ENCODE measurements at regions of chr5 and their contacts with region 1.

Region 1: GRCh38 chr5:66144074-66144833 is at the start of gene SREK1:
- DNase-seq: peak; percentile 96
- H3K4me3 Mint-ChIP-seq: peak within 1 kb of the TSS; percentile 97
- H3K27ac Mint-ChIP-seq: peak within 1 kb of the TSS; percentile 99
- H3K4me1 Mint-ChIP-seq: peaks cover 34% of the 10 kb centered on the region
- H3K27me3 Mint-ChIP-seq: no peaks in the 10 kb centered on the region
- total RNA-seq, gene SREK1: 70.3 and 75.2 TPM in 2 replicates

Region 2: DNA sequence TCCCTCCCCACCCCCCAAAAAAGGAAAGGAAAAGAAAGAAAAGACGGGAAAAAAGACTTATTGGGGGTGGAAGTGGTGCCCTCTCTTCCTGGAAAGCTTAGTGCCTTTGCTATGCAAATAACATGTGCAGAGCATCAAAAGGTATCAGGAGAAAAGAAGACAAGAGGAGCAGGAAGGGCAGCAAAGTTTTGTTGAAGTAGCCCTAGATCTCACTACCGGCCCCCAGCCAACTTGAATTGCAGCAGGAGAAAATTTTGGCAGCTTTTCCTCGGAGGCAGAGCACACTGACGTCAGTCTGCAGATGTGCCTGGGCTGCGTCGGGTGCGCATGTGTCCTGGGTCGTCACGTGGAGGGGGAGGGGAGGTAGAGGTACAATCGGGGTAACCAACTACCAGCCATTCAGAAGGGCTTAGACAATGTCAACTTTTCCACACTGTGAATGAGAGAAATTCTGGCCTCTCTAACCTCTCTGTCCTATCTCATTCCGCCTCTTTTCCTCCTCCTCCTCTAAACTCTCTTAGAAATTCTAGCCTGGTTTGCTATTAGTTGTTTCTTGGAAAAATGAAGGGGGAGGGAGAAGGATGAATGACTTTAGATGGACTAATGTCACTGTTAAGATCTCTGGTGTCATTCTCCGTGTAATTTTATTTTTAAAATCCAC is 662.5 kb before region 1 on chr5 and contains the start of gene ADAMTS6:
- intact Hi-C with region 1: loop called (anchors 10 kb)
- DNase-seq: peak; percentile 91
- H3K4me3 Mint-ChIP-seq: no peak within 1 kb of the TSS
- H3K27ac Mint-ChIP-seq: peak within 1 kb of the TSS; percentile 85
- H3K4me1 Mint-ChIP-seq: peaks cover 18% of the 10 kb centered on the region
- H3K27me3 Mint-ChIP-seq: peaks cover 6% of the 10 kb centered on the region
- total RNA-seq, gene ADAMTS6: 0.73 and 0.89 TPM in 2 replicates

Region 3: GRCh38 chr5:65624571-65625555 is 519.4 kb before region 1 on chr5 and contains the starts of genes SHLD3 and TRAPPC13:
- intact Hi-C with region 1: loop called (anchors 1 kb)
- DNase-seq: peak; percentile 95
- H3K4me3 Mint-ChIP-seq: peak within 1 kb of the TSS; percentile 91
- H3K27ac Mint-ChIP-seq: peak within 1 kb of the TSS; percentile 99
- H3K4me1 Mint-ChIP-seq: peaks cover 28% of the 10 kb centered on the region
- H3K27me3 Mint-ChIP-seq: no peaks in the 10 kb centered on the region
- total RNA-seq, gene SHLD3: 4.7 and 5.1 TPM in 2 replicates
- total RNA-seq, gene TRAPPC13: 22.4 and 27.2 TPM in 2 replicates

Region 4: GRCh38 chr5:66002415-66002814 is 141.8 kb before region 1 on chr5:
- intact Hi-C with region 1: loop called (anchors 10 kb)
- DNase-seq: no peak
- H3K4me3 Mint-ChIP-seq: no peak overlapping the region
- H3K27ac Mint-ChIP-seq: no peak overlapping the region
- H3K4me1 Mint-ChIP-seq: peaks cover 14% of the 10 kb centered on the region
- H3K27me3 Mint-ChIP-seq: no peaks in the 10 kb centered on the region

Region 5: GRCh38 chr5:66129144-66129543 is 15.1 kb before region 1 on chr5:
- intact Hi-C with region 1: no loop called
- DNase-seq: peak; percentile 45
- H3K4me3 Mint-ChIP-seq: no peak overlapping the region
- H3K27ac Mint-ChIP-seq: no peak overlapping the region
- H3K4me1 Mint-ChIP-seq: no peaks in the 10 kb centered on the region
- H3K27me3 Mint-ChIP-seq: peaks cover 5% of the 10 kb centered on the region

Region 6: GRCh38 chr5:66171349-66172344 is 27.4 kb after region 1 on chr5:
- intact Hi-C with region 1: loop called (anchors 1 kb)
- DNase-seq: peak; percentile 84
- H3K4me3 Mint-ChIP-seq: no peak overlapping the region
- H3K27ac Mint-ChIP-seq: no peak overlapping the region
- H3K4me1 Mint-ChIP-seq: peaks cover 13% of the 10 kb centered on the region
- H3K27me3 Mint-ChIP-seq: no peaks in the 10 kb centered on the region

Region 7: DNA sequence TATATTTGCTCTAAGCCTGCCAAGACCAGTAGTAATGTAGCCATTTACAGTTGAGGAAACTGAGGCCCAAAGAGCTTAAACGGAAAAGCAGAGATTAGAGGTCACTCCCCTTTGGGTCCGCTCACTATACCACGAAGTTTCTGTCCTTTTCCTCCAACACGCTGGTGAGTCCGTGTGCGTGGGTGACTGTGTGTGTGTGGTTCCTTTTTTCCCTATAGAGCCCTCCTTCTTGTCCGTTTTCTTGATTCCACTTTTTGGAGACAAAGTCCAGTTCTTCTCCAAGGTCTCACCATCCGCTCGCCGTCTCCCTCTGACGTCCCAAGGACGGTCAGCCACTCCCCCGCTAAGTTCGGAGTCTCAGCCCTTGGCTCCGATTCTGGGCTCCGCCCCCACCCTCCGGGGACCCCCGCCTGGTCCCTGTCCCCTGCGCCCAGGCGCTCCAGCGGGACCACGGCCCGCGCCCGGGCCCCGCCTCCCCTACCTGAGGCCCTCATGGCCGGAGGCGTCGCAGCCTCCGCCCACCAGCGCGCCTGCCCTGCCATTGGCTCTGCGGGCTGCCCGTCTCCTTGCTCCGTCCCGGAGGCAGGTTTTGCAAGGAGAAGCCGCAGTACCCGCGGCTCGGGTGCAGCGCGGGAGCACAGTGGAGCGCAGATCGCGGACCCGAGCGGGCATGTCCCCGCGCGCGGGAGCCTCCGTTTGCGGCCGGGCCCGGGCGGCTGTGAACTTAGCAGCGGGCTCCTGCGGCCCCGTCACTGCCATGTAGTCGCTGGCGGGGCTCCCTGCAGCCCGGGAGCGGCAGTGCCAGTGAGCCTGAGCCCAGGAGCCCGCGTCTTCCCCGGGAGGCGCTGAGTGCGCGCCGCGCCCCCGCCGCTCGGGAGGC is 451.7 kb after region 1 on chr5 and contains the start of gene MAST4:
- intact Hi-C with region 1: no loop called
- DNase-seq: peak; percentile 94
- H3K4me3 Mint-ChIP-seq: peak within 1 kb of the TSS; percentile 88
- H3K27ac Mint-ChIP-seq: peak within 1 kb of the TSS; percentile 2
- H3K4me1 Mint-ChIP-seq: peaks cover 25% of the 10 kb centered on the region
- H3K27me3 Mint-ChIP-seq: peaks cover 71% of the 10 kb centered on the region
- total RNA-seq, gene MAST4: 16.1 and 18.3 TPM in 2 replicates